Head of caudate nucleus (tissue), 42 donors: ENCODE measurements at regions of chr22 and their contacts with region 1.

Region 1: DNA sequence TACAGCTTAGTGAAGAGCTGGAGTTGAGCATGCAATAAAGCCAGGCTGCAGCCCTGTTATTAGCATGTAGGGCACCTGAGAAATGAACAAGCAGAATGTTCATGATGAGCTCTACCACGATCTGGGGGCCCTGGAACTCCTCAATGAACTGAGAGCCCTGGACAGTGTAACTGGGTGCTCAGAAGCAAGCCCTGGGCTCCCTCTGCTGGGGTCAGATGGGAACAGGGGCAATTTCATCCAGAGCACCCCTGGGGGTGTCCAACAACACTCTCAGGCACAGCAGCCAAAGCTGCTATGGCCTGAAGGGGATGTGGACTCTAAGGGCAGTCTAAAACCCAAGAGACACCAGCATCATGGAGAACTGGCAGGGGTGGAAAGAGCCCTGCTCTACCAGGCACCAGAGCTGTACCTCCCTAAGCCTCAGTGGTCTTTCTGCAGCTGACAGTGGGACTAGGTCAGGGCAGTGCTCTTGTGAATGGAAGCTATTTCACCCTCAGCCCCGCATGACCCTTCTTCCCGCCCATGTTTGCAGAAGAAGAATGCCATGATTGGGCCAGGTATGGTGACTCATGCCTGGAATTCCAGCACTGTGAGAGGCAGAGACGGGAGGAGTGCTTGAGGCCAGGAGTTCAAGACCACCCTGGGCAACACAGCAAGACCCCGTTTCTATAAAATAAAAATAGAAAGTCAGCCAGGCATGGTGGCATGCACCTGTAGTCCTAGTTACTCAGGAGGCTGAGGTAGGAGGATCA is 28.9 kb downstream of the THOC5 start:
- DNase-seq: peak in 25 of 42 donors; percentile 12 to 47 (median 29)

Region 2: DNA sequence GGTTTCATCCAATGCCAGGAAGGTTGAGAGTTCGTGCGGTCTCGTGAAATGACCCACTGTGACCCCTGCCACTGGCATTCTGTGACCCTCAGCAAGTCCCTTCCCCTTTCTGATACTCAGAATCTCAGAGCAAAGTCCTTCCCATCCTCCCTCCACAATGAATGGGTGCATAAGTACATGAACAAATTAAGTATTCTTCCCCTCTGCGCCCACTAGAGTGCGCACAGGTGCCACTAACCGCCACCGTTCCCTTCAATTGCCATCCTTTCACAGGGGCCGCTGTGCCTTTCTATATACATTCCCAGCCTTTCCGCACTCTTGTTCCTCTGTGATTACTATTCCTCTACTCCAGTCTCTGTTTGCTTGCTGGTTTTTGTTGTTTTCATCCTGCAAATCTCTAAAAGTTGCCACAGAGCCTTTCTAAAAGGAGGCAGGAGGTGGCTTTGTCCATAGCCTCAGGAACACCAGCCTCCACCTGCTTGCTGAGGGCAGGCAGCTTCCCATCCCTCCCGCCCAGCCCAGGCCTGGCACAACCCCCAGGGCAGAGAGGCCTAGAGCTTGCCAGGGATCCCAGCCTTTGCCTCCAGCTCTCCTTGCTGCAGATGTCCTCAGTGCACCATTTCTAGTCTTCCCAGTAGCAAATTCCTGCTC is 129.6 kb before region 1 on chr22:
- intact Hi-C with region 1: loop called (anchors 10 kb)
- DNase-seq: peak; percentile 49 to 89 (median 74)

Region 3: DNA sequence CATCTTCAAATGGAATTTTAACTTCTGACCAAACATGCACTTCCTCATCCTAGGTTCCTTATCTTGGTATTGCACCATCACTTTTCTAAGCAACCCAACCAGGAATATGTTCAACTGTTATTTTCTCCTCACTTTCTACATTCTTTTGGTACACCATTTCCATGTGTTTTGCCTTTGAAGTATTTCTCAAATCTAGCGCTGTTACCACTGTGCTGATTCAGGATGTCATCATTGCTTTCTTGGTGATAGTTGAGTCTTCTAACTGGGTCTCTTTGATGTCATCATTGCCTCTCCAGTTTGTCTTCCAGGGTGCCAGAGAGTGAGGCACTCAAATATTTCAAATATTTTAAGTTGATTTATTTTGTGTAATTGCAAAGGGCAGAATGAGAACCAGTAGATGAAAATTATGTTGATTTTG is 603.1 kb after region 1 on chr22:
- intact Hi-C with region 1: no loop called
- DNase-seq: no peak